BJ (cell line): ENCODE measurements at regions of chr5 and their contacts with region 1.

Region 1: GRCh38 chr5:141960449-141961202 is 2.6 kb upstream of the PCDH12 start:
- DNase-seq: no peak
- H3K4me3 ChIP-seq: no peak overlapping the region
- H3K27me3 ChIP-seq: no peaks in the 10 kb centered on the region
- CTCF ChIP-seq: peak; percentile 82

Region 2: GRCh38 chr5:141664732-141665461 is 295.7 kb before region 1 on chr5:
- CTCF ChIA-PET with region 1: interaction called, 11 read pairs
- POLR2A ChIA-PET with region 1: no interaction called
- DNase-seq: no peak
- H3K4me3 ChIP-seq: no peak overlapping the region
- H3K27me3 ChIP-seq: no peaks in the 10 kb centered on the region
- CTCF ChIP-seq: peak; percentile 96

Region 3: GRCh38 chr5:141681695-141682641 is 278.7 kb before region 1 on chr5 and contains the start of gene ARAP3:
- CTCF ChIA-PET with region 1: interaction called, 16 read pairs
- POLR2A ChIA-PET with region 1: interaction called, 3 read pairs
- DNase-seq: peak; percentile 49
- H3K4me3 ChIP-seq: peak within 1 kb of the TSS; percentile 44
- H3K27me3 ChIP-seq: no peaks in the 10 kb centered on the region
- CTCF ChIP-seq: no peak
- polyA plus RNA-seq, gene ARAP3: 4.1 and 5.6 TPM in 2 replicates

Region 4: DNA sequence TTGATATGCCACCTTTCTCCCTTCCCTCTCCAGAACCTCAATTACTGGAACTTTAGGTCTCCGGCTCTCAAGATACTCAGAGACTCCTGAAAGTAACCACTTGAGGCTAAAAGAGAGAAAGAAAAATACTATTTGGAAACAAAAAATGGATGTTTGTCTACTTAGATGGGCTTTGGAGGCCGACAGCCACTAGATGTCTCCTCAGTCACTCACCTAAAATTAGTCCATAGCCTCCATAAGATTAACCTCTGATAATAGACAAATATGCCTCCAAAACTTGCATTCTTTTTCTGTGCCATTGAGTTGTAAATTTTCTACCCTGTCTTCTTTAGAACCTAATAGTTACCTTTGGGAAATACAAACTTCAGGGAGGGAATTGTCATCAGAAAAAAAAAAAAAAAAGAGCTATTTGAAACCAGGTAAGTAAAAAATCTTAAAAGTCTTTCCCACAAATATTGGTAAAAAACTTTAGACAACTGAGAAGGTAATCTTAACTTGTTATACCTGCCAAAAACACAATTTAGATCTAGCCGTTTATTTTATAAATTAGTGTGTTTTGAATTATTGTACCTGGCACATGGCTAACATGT is 71.2 kb before region 1 on chr5:
- CTCF ChIA-PET with region 1: interaction called, 70 read pairs
- POLR2A ChIA-PET with region 1: no interaction called
- DNase-seq: no peak
- H3K4me3 ChIP-seq: no peak overlapping the region
- H3K27me3 ChIP-seq: no peaks in the 10 kb centered on the region
- CTCF ChIP-seq: peak; percentile 61

Region 5: DNA sequence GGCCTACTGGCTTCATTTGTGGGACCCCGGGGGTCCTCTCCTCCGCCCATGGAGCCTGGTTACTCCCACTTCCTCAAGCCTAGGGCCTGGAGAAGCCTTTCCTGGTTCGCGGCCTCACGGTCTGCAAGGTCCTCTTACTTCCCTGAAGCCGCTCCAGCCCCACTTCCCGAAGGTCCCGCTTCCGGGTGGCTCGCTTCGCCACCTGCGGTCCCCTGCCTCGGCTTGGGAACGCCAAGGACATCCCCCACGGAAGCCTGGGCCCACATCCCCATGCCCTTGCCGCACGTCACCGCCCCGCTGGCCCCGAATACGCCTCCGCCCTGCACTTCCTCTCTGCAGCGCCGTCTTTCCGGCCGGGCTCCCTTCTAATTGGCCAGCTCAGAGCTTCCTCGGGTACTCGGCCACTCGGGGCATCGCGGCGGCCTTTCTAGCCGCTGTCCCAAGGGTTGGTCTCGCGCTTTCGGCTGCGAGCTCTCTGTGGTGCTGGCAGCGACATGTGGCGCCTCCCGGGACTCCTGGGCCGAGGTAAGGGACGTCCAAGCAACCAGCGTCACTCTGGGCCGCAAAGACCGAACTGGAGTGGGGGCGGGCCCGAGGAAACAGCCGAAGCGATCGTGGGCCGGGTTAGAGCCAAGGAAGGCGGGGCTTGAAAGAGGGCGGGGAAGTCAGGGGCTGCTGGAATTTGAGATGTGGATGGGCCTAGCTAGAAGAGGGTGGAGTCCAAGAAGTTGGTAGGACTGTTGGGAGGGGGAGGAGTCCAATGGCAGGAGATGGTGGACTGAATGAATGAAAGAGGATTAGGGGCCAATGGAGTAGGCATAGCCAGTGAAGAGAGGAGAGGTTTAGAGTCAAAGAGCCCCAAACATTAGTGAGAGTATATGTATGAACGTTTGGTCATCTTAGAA is 36.9 kb before region 1 on chr5 and contains the start of gene DELE1:
- CTCF ChIA-PET with region 1: interaction called, 23 read pairs
- POLR2A ChIA-PET with region 1: no interaction called
- DNase-seq: peak; percentile 62
- H3K4me3 ChIP-seq: peak within 1 kb of the TSS; percentile 65
- H3K27me3 ChIP-seq: no peaks in the 10 kb centered on the region
- CTCF ChIP-seq: no peak
- polyA plus RNA-seq, gene DELE1: 65.4 and 110 TPM in 2 replicates

Region 6: DNA sequence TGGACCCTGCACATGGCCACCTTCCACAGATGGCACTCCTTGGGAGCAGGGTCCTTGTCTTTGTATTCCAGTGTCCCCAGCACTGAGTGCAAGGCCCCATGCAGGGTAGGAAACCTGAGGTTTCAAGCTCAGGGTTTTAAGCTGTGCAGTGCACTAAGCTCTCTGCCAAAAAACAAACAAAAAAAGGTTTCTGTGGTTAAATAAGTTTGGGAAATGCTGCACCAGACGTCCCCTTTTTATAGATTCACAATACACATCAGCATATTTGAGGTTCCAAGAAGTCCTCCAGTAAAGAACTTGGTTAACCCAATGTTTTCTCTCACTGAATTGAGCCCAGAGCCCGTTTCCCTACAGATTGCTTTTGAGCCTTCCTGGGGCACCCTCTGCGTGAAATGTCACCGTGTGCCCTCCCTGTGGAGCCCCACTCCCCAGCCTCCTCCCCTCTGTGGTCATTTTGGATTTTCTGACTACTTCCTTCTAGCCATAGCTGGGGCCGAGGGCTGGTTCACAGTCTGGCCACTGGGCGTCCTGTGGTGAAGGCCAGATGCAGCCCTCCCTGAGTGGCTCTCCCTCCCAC is 19.8 kb before region 1 on chr5:
- CTCF ChIA-PET with region 1: interaction called, 57 read pairs
- POLR2A ChIA-PET with region 1: no interaction called
- DNase-seq: peak; percentile 41
- H3K4me3 ChIP-seq: no peak overlapping the region
- H3K27me3 ChIP-seq: no peaks in the 10 kb centered on the region
- CTCF ChIP-seq: peak; percentile 48

Region 7: DNA sequence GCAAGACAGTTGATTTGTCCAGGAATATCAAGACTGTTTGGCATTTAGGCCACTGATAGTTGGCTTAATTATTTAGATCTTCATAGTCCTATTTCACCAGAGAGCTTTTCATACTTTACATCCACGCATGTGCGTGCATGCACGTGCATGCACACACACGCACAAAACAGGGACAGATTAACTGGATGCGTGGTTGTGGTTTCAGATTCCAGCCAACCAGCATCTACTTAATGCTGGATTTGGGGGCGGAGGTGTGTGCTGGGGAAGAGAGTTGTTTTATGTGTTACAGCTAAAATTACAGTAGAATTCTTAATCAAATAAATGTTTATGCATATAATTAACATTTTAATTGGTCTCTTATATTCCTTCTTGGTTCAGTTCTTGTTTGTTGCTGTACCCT is 15.6 kb after region 1 on chr5:
- CTCF ChIA-PET with region 1: interaction called, 50 read pairs
- POLR2A ChIA-PET with region 1: no interaction called
- DNase-seq: no peak
- H3K4me3 ChIP-seq: no peak overlapping the region
- H3K27me3 ChIP-seq: no peaks in the 10 kb centered on the region
- CTCF ChIP-seq: no peak